Cardiac septum (tissue), 1 donor: ENCODE measurements at regions of chr19 and their contacts with region 1.

Region 1: DNA sequence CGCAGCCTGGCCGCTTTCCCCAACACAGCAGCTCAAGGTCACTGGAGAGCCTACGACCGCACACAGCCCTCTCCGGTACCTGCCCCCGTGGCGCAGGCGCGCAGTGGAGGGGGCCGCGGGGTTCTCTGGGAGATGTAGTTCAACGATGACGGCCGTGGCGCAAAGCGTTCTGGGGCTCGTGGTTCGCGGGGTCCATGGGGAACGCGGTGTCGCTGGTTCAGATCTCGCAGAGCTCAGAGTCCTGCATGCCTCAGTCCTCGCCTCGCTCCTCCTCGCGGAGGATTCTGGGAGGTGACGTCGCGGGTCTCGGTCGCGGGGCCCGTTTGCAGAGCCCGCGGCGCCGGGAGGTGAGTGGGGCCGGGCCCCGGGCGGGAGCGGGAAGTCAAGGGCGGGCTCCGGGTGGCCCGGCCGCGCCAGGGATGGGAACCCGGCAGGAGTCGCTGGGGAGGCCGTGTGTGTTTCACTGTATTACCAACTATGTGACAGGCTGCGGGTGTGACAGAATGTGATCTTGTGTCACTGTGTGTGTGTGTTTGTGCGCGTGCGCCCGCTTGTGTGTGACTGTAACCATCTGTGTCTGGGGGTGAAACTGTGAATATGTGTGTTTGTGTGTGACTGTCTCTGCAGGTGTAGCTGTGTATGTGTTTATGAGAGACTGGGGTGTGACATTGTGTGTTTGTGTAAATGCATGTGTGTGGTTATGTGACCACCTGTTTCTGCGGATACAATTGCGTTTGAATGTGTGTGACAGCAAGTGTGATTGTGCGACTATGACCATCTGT is at the start of gene ZNF527:
- DNase-seq: peak; percentile 98
- total RNA-seq, gene ZNF527: 6.7 TPM

Region 2: GRCh38 chr19:37217855-37218591 is 153.0 kb before region 1 on chr19 and contains the start of gene ZNF383:
- intact Hi-C with region 1: loop called (anchors 5 kb)
- DNase-seq: peak; percentile 92
- total RNA-seq, gene ZNF383: 9.2 TPM

Region 3: GRCh38 chr19:37334179-37335071 is 36.6 kb before region 1 on chr19:
- intact Hi-C with region 1: loop called (anchors 5 kb)
- DNase-seq: peak; percentile 96

Region 4: DNA sequence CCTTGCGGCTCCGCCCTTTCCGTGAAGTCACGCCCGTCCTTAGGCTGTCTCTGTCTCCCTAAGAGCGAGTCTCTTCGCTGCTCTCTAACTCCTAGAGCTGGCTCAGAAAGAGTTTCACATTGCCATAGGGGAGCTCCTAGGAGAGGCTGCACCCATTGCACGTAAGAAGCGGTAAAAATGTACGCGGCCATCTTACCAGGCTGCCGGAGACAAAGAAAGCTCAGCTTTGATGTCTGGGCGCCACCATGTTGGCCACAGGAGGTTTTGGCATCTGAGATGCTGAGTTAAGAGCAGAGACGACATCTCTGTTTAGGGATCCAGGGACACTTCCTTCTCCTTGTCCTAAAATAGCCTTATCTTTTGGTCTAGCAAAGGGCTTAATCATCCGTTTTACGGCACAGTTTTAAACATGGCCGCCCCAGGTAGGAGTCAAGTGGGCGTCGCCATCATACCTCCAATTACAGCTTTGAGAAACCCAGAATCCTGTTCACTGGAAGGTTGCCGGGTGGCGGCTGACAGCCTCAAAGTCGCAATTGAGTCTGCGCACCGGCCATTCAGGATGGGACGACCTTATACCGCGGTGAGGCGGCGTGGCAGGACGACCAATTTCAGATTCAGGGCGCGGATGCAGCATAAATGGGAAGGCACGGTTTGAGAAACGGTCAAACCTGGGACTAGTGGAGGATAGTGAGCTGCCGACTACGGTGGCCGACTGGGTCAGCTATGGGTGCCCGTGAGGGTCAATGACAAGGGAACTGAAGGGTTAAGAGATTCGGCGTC is 135.5 kb after region 1 on chr19 and contains the start of gene ZNF793:
- intact Hi-C with region 1: loop called (anchors 1 kb)
- DNase-seq: peak; percentile 90
- total RNA-seq, gene ZNF793: 8.3 TPM